ENCODE measurements at regions of chr2 and their contacts with region 1.

Region 1: GRCh38 chr2:161745866-161746582 is 121.8 kb downstream of the SLC4A10 start:
- DNase-seq: no peak
- ATAC-seq: no peak

Region 2: GRCh38 chr2:159982842-159983785 is 1762.9 kb before region 1 on chr2:
- intact Hi-C with region 1: no loop called
- DNase-seq: no peak
- ATAC-seq: peak; percentile 60

Region 3: DNA sequence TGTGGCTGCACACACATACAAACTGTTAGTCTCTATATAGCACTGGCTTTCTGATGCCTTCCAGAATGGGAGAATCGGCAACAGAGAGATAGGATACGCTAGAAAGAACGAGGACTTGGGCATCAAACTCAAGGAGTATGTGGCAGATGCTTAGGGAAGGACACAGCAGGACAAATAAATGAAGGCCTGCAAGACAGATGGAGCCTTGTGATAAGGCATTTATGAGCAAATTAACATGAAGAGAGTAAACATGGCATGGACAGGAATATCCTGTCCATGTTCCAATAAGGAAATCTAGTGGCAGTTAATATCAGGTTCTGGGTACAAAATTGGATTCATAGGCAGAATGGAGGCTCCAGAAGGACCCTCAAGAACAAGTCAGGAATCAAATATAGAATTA is 15.1 kb after region 1 on chr2:
- intact Hi-C with region 1: loop called (anchors 1 kb)
- DNase-seq: no peak
- ATAC-seq: no peak